Psoas muscle (tissue), 8 donors: ENCODE measurements at regions of chr6 and their contacts with region 1.

Region 1: GRCh38 chr6:145963216-145964068 is 716 bp downstream of the SHPRH start:
- DNase-seq: peak in 1 of 2 donors; percentile 73
- ATAC-seq: peak; percentile 53 to 72 (median 56)
- H3K4me3 ChIP-seq: peak overlapping the region; percentile 87
- H3K27ac ChIP-seq: peak overlapping the region; percentile 87
- H3K4me1 ChIP-seq: peaks cover 31% of the 10 kb centered on the region
- H3K27me3 ChIP-seq: no peaks in the 10 kb centered on the region
- CTCF ChIP-seq: no peak

Region 2: GRCh38 chr6:145814501-145815308 is 148.7 kb before region 1 on chr6 and contains the start of gene FBXO30:
- intact Hi-C with region 1: loop called in 1 of 2 experiments (anchors 2 kb)
- DNase-seq: peak; percentile 89 to 93
- ATAC-seq: peak; percentile 95 to 98 (median 95)
- H3K4me3 ChIP-seq: peak within 1 kb of the TSS; percentile 84
- H3K27ac ChIP-seq: peak within 1 kb of the TSS; percentile 98
- H3K4me1 ChIP-seq: peaks cover 52% of the 10 kb centered on the region
- H3K27me3 ChIP-seq: no peaks in the 10 kb centered on the region
- CTCF ChIP-seq: no peak
- total RNA-seq, gene FBXO30: 11.3 to 75.4 (median 20.5) TPM

Region 3: DNA sequence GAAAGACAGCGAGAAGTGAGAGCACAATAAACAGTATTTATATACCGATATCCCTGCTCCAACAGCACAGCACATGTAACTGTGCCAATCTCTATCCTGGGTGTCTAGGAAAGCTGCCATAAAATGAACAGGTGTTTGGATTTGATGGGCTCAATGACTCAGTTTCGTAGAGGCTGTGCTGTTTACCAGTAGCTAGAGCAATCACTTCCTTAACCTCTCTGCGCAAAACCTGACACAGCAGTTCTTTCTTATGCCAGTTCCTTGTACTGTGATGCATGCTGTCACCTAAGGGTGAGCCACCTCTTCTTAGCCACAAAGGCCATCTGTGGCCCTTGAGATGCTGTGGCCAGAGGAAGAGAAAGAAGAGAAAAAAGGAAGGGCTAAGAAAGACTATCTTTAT is 58.6 kb before region 1 on chr6:
- intact Hi-C with region 1: loop called in 1 of 2 experiments (anchors 5 kb)
- DNase-seq: no peak
- ATAC-seq: peak; percentile 89 to 96 (median 96)
- H3K4me3 ChIP-seq: no peak overlapping the region
- H3K27ac ChIP-seq: peak overlapping the region; percentile 86
- H3K4me1 ChIP-seq: peaks cover 50% of the 10 kb centered on the region
- H3K27me3 ChIP-seq: no peaks in the 10 kb centered on the region
- CTCF ChIP-seq: no peak

Region 4: DNA sequence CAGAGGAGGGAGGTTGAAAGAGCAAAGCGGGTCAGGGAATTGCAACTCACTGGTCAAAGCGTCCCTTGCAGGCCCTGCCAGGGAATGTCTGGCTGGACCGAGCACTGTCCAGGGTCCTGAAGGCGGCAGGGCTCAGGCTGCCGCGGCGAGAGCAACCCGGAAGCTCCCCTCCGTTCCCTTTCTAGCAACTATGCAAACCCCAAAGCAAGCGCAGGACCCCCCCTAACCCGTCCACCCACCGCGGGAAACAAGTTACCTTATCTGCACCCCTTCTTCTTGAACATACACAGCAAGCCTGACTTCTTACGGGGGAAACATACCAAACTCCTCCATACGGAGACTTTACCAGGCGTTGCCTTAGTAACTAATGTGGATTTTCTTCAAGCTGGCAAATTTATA is 64.8 kb after region 1 on chr6:
- intact Hi-C with region 1: no loop called
- DNase-seq: peak; percentile 59 to 68
- ATAC-seq: peak; percentile 68 to 71 (median 70)
- H3K4me3 ChIP-seq: no peak overlapping the region
- H3K27ac ChIP-seq: no peak overlapping the region
- H3K4me1 ChIP-seq: no peaks in the 10 kb centered on the region
- H3K27me3 ChIP-seq: peaks cover 0 to 40% (median 13%) of the 10 kb centered on the region in 3 donors
- CTCF ChIP-seq: no peak

Region 5: DNA sequence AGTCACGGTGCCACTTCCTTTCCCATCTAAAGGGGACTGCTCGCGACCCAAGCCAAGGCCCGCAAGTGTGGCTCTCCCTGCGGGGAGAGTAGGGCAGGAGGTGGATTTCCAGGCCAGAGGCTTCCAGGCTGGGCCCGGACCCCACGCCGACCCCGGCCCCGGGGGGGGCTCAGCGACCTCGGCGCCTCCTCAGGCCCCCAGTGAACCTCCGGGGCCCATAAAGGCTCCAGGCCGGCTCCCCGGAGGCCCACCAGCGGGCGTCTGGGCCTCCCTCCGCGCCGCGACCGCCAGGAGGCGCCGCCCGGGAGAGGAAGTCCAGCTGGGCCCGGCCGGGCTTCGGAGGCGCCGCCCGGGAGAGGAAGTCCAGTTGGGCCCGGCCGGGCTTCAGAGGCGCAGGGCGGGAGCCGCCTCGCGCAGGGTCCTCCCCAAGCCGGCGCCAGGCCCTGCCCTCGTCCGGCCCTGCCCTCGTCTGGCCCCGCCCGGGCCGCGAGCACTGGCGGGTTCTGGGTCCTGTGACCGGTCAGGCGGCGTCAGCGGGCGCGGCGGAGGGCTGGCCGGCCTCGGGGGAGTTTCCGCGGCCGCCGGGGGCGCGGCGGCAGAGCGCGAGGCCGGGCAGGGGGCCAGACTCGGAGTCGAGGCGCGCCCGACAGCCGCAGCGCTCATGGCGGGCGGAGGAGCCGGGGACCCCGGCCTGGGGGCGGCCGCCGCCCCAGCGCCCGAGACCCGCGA is 579.9 kb after region 1 on chr6 and contains the start of gene RAB32:
- intact Hi-C with region 1: loop called in 1 of 2 experiments (anchors 10 kb)
- DNase-seq: peak; percentile 95
- ATAC-seq: peak; percentile 87 to 98 (median 95)
- H3K4me3 ChIP-seq: peak within 1 kb of the TSS; percentile 65
- H3K27ac ChIP-seq: peak within 1 kb of the TSS; percentile 82
- H3K4me1 ChIP-seq: no peaks in the 10 kb centered on the region
- H3K27me3 ChIP-seq: peaks cover 0 to 7% (median 5%) of the 10 kb centered on the region in 3 donors
- CTCF ChIP-seq: peak; percentile 61
- total RNA-seq, gene RAB32: 2.4 to 3.8 (median 3.2) TPM